Right ventricle myocardium inferior (tissue), 1 donor: ENCODE measurements at regions of chr4 and their contacts with region 1.

Region 1: GRCh38 chr4:79865201-79865597 is 207.8 kb downstream of the ANTXR2 start:
- DNase-seq: no peak
- ATAC-seq: no peak

Region 2: DNA sequence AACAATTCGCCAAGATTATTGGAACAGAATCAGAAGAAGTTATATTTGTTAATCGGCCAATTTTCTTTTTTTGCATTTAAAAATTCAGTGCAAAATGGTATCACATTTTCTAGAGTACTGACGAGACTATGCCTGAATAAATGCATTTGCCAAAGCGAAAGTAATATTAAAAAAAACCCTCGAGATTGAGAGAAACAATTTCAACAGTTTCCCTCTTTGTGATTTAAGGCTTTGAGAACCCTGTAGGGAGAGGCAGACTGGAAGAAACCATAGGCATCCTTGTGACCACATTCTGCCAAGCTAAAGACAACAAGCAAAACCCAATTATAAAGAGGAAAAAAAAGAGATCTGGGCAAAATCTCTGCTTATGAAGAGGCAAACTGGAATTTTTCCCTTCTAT is 239.1 kb before region 1 on chr4:
- intact Hi-C with region 1: no loop called
- DNase-seq: no peak
- ATAC-seq: no peak

Region 3: GRCh38 chr4:79759793-79760192 is 105.4 kb before region 1 on chr4:
- intact Hi-C with region 1: loop called (anchors 10 kb)
- DNase-seq: no peak
- ATAC-seq: no peak

Region 4: DNA sequence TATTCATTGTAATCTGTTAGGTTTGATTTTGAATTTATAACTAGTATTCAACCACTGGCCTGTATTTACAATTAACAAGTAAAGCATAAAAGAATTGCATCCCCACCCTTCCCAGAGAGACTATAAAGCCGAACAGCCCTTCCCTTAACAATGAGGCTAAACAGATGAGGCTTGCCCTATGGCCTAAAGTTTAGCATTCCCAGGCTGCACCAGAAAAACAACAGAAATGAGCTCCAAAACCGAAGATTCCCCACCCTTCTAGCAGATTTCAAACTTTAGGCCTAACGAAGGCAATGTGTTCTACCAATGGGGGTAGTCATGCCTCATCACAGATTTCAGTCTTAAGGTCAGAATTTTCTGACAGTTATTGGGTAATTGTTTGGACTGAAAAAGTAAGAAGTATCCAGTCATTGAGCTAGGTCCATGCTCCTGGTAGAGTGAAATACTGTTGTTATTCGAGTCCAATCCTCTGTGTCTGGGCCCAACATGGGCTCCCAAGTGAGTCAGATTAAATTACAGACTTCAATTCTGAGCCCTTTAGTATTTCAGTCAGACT is 10.2 kb after region 1 on chr4:
- intact Hi-C with region 1: loop called (anchors 1 kb)
- DNase-seq: no peak
- ATAC-seq: no peak

Region 5: DNA sequence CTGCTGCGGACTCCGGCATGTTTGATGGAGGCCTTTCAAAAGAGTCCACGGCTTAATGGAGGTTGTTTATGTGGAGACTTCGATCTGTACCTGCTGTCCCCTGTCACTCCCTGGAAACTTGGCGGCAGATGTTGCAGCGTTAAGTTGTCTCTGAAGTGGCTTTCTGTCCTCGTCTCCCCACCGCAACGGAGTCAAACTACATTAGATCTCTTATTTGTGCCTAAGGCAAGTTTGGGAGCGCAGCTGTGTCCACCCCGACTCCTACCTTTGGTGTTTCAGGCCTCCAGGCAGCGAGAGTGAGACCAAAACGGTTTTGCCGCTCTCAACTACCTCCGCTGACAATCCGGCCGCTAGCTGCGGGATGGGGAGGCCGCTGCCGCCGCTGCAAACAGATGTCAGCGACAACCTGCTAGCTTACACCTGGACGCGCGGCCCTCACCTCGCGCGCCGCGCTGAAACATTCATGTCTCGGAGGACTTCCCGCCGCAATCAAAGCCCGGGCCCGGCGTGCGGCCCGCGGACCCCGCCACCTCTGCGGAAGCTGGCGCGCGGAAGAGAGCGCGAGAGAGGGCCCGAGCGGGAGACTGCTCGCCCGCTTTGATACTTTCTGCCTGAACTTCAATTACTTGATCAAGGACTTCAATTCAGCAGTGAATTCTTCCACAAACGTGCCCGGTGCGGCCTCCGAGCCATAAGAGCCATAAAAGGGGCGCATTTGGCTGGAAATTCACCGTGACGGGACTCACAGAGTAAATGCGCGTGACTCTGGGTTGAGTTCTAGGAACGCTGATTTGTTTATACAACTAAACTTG is 99.4 kb after region 1 on chr4:
- intact Hi-C with region 1: no loop called
- DNase-seq: peak; percentile 59
- ATAC-seq: no peak

Region 6: DNA sequence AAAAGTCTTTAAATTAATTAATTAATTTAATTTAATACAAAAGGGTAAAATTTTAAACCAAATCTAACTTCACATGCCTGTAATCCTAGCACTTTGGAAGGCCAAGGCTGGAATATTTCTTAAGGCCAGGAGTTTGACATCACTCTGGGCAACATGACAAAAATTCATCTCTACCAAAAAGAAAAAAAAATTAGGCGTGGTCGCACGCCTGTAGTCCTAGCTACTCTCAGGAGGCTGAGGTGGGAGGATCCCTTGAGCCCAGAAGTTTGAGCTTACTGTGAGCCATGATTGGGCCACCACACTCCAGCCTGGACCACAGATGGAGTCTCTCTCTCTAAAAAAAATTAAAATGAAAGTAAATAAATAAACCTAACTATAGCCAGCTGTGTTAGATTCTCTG is 247.0 kb after region 1 on chr4:
- intact Hi-C with region 1: no loop called
- DNase-seq: no peak
- ATAC-seq: peak; percentile 92